CD8-positive, alpha-beta T cell (primary cell): ENCODE measurements at regions of chr7 and their contacts with region 1.

Region 1: GRCh38 chr7:36986429-36987362 is 262.4 kb upstream of the AOAH start:
- DNase-seq: peak; percentile 28 to 72 (median 60)
- ATAC-seq: peak; percentile 71
- H3K4me3 ChIP-seq: no peak overlapping the region
- H3K4me3 Mint-ChIP-seq: no peak overlapping the region
- H3K27ac ChIP-seq: no peak overlapping the region
- H3K27ac Mint-ChIP-seq: no peak overlapping the region
- H3K4me1 ChIP-seq: no peaks in the 10 kb centered on the region
- H3K4me1 Mint-ChIP-seq: peaks cover 46% of the 10 kb centered on the region
- H3K27me3 ChIP-seq: no peaks in the 10 kb centered on the region
- H3K27me3 Mint-ChIP-seq: no peaks in the 10 kb centered on the region
- CTCF ChIP-seq: peak; percentile 79

Region 2: DNA sequence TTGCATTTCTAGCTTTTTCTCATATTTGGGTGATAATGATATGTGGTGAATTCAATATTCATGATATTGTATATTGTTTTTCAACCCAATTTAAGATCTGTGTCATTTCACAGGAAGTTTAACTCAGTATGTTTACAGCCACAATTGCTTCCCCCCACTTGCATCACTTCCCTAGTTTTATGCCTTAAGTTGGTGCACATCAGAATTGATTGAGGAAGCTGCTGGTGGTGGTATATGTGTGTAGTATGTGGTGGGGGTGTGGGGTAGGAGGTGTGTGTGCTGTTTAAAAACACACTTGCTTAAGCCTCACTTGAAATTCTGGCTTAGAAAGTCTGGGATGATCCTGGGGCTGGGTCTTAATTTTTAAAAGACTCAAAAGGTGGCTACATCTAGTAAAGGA is 17.3 kb before region 1 on chr7:
- CTCF ChIA-PET with region 1: interaction called, 13 read pairs
- POLR2A ChIA-PET with region 1: no interaction called
- intact Hi-C with region 1: no loop called
- DNase-seq: peak in 6 of 9 experiments; percentile 11 to 70 (median 37)
- ATAC-seq: peak; percentile 87
- H3K4me3 ChIP-seq: no peak overlapping the region
- H3K4me3 Mint-ChIP-seq: no peak overlapping the region
- H3K27ac ChIP-seq: no peak overlapping the region
- H3K27ac Mint-ChIP-seq: peak overlapping the region; percentile 43
- H3K4me1 ChIP-seq: peaks cover 12% of the 10 kb centered on the region
- H3K4me1 Mint-ChIP-seq: peaks cover 42% of the 10 kb centered on the region
- H3K27me3 ChIP-seq: no peaks in the 10 kb centered on the region
- H3K27me3 Mint-ChIP-seq: no peaks in the 10 kb centered on the region
- CTCF ChIP-seq: no peak

Region 3: DNA sequence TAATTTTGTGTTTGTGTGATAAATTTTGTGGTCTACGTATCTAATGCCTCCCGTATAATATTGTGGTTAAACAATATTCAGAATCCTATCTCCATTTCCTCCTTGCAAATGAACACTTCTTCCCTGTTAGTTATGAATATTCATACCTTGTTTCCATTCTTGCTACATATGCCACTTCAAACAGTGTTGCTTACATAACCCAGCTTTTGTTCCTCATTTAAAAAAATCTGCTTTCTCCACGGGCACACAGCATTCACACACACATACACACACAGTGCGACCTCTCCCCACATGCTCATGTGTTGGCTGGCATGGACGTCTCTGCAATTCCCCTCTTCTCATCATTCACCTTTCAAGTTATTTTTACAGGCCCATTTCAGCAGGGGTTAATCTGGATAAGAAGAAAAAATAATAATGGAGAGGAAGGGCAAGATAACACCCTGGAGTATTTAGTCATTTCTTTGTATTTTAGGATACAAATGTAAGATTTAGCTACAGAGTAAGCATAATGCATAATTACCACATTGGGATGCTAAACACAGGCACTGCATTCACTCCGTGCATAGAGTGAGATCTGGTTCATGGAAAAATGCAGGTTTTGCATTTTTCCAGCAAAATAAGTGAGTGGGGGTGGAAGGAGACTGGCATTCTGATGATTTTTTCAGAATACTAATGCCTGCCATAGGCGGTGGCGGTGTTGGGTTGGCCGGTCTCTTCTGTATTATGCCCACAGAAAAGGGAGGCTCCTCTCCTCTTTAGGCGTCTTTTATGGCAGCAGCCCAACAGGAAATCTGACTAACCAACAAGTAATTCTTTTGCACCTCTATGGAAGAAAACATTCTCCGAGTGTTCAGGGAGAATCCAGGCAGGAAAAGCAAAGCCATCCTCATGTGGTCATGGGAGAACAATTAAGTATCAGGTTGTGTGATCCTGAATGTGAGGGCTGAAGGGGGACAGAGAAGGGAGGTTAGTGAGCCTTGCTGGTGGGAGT is 493.6 kb after region 1 on chr7:
- CTCF ChIA-PET with region 1: no interaction called
- POLR2A ChIA-PET with region 1: no interaction called
- intact Hi-C with region 1: no loop called
- DNase-seq: peak in 1 of 9 experiments; percentile 7
- ATAC-seq: no peak
- H3K4me3 ChIP-seq: no peak overlapping the region
- H3K4me3 Mint-ChIP-seq: no peak overlapping the region
- H3K27ac ChIP-seq: no peak overlapping the region
- H3K27ac Mint-ChIP-seq: no peak overlapping the region
- H3K4me1 ChIP-seq: no peaks in the 10 kb centered on the region
- H3K4me1 Mint-ChIP-seq: no peaks in the 10 kb centered on the region
- H3K27me3 ChIP-seq: peaks cover 0 to 2% of the 10 kb centered on the region in 2 experiments
- H3K27me3 Mint-ChIP-seq: peaks cover 12% of the 10 kb centered on the region
- CTCF ChIP-seq: no peak